Aorta (tissue), 5 donors: ENCODE measurements at regions of chr16 and their contacts with region 1.

Region 1: DNA sequence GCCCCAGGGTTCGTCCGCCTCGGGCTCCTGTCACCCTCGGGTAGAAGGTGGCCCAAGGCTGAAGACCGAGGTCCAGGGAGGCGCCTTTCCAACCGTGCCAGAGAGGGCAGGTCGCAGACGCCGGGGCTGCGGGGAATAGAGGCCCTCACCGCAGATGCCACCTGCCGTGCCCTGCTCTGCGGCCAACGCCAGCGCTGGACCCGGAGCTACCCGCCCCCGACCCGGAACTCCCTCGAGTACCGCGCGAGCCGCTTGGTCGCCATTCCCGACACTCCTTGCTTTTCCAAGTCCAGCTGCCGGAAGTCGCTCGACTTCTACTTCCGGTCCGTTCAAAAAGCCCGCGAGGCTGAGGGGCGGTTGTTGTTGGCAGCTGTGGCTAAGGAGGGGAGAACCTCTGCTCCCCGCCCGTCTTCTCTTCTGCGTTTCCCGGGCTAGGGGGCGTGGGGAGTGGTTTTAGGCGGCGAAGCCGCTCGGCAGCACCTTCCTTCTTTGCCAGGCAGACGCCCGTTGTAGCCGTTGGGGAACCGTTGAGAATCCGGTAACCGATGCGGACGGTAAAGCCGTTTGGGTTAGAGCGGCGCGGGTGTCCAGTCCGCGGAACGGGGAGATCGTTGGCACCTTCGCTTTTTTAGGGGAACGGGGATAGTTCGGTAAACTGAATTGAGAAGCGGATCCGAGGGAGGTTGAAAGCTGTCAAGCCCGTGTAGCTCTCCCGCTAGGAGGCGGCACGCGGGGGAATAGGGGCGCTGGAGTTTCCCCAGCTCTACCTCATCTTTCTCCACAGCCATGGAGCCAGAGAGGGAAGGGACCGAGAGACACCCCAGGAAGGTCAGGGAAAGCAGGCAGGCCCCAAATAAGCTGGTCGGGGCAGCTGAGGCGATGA is at the starts of genes ERI2 and REXO5:
- DNase-seq: peak; percentile 94 to 96
- ATAC-seq: peak; percentile 95
- H3K4me3 ChIP-seq: peak within 1 kb of the TSS; percentile 51 to 74
- H3K27ac ChIP-seq: peak within 1 kb of the TSS; percentile 47 to 98
- H3K4me1 ChIP-seq: no peaks in the 10 kb centered on the region
- H3K27me3 ChIP-seq: no peaks in the 10 kb centered on the region
- total RNA-seq, gene ERI2: 6.7 to 14.3 TPM
- total RNA-seq, gene REXO5: 1.1 to 3.0 TPM

Region 2: GRCh38 chr16:21083729-21084268 is 277.4 kb after region 1 on chr16:
- intact Hi-C with region 1: loop called (anchors 5 kb)
- DNase-seq: peak; percentile 69 to 88
- ATAC-seq: peak; percentile 86
- H3K4me3 ChIP-seq: no peak overlapping the region
- H3K27ac ChIP-seq: no peak overlapping the region
- H3K4me1 ChIP-seq: no peaks in the 10 kb centered on the region
- H3K27me3 ChIP-seq: no peaks in the 10 kb centered on the region